Right ventricle myocardium superior (tissue), 1 donor: ENCODE measurements at regions of chr12 and their contacts with region 1.

Region 1: DNA sequence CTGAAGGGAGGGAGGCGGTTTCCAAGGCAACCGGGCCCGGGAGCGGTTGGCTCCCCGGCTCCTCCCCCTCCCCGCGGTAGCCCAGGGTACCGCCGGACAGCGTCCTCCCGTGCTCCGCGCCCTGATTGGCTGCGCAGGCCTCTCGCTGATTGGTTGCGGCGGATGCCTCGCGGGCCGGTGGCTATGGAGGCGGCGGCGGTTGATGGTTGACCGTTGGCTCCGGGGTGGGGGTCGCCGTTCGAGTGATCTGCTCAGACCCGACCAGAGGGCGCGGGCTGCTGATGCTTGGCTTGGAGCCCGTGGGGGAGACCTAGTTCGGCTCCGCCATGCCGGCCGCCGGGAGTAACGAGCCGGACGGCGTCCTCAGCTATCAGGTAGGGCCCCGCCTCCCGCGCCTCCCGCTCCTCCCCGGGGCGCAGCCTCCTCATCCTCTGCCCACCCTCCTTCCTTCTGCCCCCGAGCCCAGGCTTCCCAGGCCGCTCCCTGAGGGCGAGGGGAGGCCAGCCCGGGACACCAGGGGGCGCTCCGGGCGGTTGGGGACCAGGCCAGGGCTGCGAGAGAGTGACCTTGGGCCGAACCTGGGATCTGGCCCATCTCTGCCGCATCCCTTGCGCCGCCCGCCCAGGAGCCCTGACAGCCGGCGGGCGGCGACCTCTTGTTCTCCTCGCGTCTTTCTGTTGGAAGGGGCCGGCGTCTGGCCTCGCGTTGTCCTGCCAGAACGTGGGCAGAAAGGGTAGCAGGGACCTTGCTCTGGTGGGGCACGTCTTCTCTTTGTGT is at the start of gene SLC4A8:
- DNase-seq: peak; percentile 86
- ATAC-seq: peak; percentile 96
- total RNA-seq, gene SLC4A8: 0.89 TPM

Region 2: DNA sequence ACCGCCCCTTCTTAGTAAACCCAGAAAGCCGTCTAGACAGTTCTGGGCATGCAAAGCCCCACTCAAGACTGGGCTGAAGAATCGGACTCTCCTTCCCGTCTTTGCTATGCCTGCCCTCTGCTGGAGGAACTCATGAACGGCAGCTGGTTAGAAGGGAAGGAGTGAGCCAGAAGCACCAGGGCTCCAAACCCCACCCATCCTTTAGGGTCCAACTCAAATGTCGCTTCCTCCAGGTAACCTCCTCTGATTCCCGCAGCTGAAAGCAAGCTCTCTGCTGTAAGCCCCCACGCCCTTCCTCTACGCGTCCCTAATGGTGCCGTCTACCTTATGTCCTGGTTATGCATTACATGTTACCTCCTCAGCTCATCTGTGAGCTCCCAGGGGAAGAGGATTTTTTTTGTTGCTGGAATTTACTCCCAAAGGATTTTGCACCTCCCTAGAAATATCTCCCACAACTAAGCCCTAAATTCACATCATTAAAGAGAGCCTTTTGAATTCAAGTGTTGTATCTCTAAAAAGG is 107.2 kb after region 1 on chr12:
- intact Hi-C with region 1: loop called (anchors 5 kb)
- DNase-seq: peak; percentile 67
- ATAC-seq: peak; percentile 90

Region 3: DNA sequence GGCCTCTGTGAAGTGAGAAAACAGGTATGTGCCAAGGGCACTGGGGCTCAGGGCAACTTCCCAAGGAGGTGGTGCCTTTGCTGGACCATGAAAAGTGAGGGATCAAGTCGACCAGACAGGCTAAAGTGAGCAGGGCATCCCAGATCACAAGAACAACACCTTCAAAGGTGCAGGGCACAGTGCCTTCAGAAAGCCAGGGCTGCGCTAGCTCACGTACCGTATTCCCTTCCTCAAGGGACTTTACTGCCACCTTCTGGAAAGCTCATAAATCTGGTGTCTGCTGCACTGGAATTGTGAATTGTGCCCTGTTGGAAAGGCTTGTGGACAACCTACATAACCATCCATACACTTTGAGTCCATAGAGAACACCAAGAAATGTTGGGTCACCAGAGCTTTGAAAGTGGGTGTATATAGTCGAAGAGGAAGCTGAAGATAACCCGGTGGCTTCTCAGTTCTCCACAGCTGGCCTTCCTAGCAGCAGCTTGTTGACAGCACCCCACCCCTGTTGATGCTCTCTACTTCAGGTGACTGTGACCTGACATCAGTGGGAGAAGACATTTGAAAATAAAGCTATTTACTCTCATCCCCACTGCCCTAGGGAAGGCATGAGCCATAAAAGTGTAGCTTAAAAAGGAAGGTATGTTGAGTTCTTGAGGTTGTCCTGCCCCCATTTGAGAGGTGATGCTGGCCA is 399.2 kb after region 1 on chr12:
- intact Hi-C with region 1: loop called (anchors 10 kb)
- DNase-seq: no peak
- ATAC-seq: peak; percentile 43

Region 4: GRCh38 chr12:51871126-51871525 is 446.3 kb after region 1 on chr12:
- intact Hi-C with region 1: loop called (anchors 5 kb)
- DNase-seq: peak; percentile 80
- ATAC-seq: peak; percentile 74